ENCODE measurements at regions of chr2 and their contacts with region 1.

Region 1: DNA sequence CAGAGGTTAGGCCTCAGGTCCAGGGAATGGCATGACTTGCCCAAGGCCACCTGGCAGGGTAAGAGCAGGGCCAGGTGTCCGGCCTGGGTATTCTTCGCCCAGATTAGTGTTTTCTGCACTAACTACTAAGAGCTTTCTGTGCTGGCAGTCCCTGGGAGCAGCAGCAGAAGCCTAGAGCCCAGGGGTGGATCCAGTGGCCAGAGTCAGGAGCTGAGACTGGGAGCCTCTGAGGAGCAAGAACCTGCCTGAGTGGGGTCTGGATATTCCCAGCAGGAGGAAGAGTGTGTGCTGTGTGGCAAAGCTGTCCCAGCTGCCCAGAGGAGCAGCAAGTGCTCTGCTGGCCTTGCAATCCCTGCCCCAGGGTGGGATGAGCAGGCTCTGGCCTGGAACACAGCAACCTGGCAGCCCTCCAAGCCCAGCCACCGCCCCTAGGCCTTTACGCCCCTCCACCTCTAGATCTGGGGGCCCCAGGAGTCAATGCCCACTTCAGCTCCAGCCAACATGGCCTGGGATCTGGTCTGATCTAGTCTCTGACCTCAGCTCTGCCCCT is 30.7 kb upstream of the GPAT2 start:
- DNase-seq: no peak
- ATAC-seq: no peak
- H3K4me3 Mint-ChIP-seq: no peak overlapping the region
- H3K27ac Mint-ChIP-seq: no peak overlapping the region
- H3K4me1 Mint-ChIP-seq: peaks cover 5% of the 10 kb centered on the region
- H3K27me3 Mint-ChIP-seq: no peaks in the 10 kb centered on the region

Region 2: DNA sequence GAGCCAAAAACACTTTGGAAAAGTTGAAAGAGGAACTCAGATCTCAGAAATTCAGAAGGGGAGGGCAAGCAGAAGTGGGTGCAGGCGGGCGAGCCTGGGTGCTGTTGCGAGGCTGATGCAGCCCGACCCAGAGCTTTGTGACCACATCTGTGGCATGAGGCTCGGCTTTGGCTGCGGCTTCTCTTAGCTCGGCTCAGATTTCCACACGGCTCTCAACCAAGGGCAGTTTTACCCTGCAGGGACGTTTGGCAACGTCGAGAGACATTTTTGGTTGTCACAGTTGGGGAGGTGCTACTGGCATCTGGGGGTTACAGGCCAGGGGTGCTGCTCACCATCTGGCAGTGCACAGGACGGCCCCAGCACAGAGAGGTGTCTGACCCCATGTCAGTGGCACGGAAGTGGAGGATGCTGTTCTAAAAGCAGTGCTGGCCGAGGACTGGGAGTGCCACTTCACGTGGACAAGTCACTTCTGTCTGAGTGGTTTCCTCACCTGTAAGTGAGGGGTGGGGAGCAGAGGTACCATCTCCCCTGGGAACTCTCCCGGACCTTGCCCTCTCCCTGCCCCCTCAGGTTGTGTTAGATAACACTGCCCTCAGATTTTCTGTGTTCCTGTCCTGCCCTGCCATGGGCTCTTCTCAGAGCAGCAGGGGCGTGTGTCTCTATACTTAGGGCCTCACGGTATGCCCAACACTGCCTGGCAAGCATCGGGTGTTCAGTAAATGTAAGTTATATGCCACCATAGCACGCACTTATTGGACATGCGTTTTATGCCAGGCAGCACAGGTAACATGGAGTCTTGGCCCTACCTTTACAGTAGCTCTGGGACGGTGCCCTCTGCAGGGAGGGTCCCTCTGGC is 711.6 kb before region 1 on chr2:
- CTCF ChIA-PET with region 1: no interaction called
- POLR2A ChIA-PET with region 1: no interaction called
- intact Hi-C with region 1: no loop called
- DNase-seq: no peak
- ATAC-seq: no peak
- H3K4me3 Mint-ChIP-seq: no peak overlapping the region
- H3K27ac Mint-ChIP-seq: no peak overlapping the region
- H3K4me1 Mint-ChIP-seq: no peaks in the 10 kb centered on the region
- H3K27me3 Mint-ChIP-seq: peaks cover 3% of the 10 kb centered on the region

Region 3: GRCh38 chr2:95760806-95761530 is 304.5 kb before region 1 on chr2:
- CTCF ChIA-PET with region 1: no interaction called
- POLR2A ChIA-PET with region 1: no interaction called
- intact Hi-C with region 1: loop called in 1 of 2 experiments (anchors 10 kb)
- DNase-seq: no peak
- ATAC-seq: no peak
- H3K4me3 Mint-ChIP-seq: no peak overlapping the region
- H3K27ac Mint-ChIP-seq: no peak overlapping the region
- H3K4me1 Mint-ChIP-seq: no peaks in the 10 kb centered on the region
- H3K27me3 Mint-ChIP-seq: no peaks in the 10 kb centered on the region

Region 4: GRCh38 chr2:96320728-96321622 is 255.5 kb after region 1 on chr2:
- CTCF ChIA-PET with region 1: no interaction called
- POLR2A ChIA-PET with region 1: no interaction called
- intact Hi-C with region 1: no loop called
- DNase-seq: peak; percentile 54
- ATAC-seq: peak; percentile 10
- H3K4me3 Mint-ChIP-seq: peak overlapping the region; percentile 73
- H3K27ac Mint-ChIP-seq: peak overlapping the region; percentile 63
- H3K4me1 Mint-ChIP-seq: peaks cover 52% of the 10 kb centered on the region
- H3K27me3 Mint-ChIP-seq: peaks cover 10% of the 10 kb centered on the region

Measured in activated CD4-positive, alpha-beta T cell treated with anti-CD3 and anti-CD28 coated beads for 36 hours (primary cell).